HepG2 (cell line): ENCODE measurements at regions of chr4 and their contacts with region 1.

Region 1: GRCh38 chr4:22460266-22460665 is 55.6 kb downstream of the ADGRA3 start:
- DNase-seq: peak; percentile 81
- ATAC-seq: peak; percentile 82
- H3K4me3 ChIP-seq: no peak overlapping the region
- H3K27ac ChIP-seq: peak overlapping the region; percentile 84
- H3K4me1 ChIP-seq: peaks cover 79% of the 10 kb centered on the region
- H3K27me3 ChIP-seq: no peaks in the 10 kb centered on the region
- CTCF ChIP-seq: no peak
- EP300 ChIP-seq: peak in 1 of 2 experiments; percentile 83; a peak in 2 of 4 replicates
- POLR2A ChIP-seq: no peak
- RAD21 ChIP-seq: no peak

Region 2: GRCh38 chr4:22474636-22475310 is 14.5 kb after region 1 on chr4:
- CTCF ChIA-PET with region 1: no interaction called
- POLR2A ChIA-PET with region 1: interaction called, 3 read pairs
- in situ Hi-C with region 1: no loop called
- intact Hi-C with region 1: loop called (anchors 2 kb)
- DNase-seq: peak; percentile 84
- ATAC-seq: peak; percentile 89
- H3K4me3 ChIP-seq: peak overlapping the region in 1 of 3 experiments; percentile 21; a peak in 2 of 6 replicates
- H3K27ac ChIP-seq: peak overlapping the region; percentile 55
- H3K4me1 ChIP-seq: peaks cover 53% of the 10 kb centered on the region
- H3K27me3 ChIP-seq: no peaks in the 10 kb centered on the region
- CTCF ChIP-seq: no peak
- EP300 ChIP-seq: 0 out of 4 replicates have a peak, but pooled peaks of 1 of the 2 experiments have one; percentile 25
- POLR2A ChIP-seq: no peak
- RAD21 ChIP-seq: no peak